ENCODE measurements at regions of chr10 and their contacts with region 1.

Region 1: DNA sequence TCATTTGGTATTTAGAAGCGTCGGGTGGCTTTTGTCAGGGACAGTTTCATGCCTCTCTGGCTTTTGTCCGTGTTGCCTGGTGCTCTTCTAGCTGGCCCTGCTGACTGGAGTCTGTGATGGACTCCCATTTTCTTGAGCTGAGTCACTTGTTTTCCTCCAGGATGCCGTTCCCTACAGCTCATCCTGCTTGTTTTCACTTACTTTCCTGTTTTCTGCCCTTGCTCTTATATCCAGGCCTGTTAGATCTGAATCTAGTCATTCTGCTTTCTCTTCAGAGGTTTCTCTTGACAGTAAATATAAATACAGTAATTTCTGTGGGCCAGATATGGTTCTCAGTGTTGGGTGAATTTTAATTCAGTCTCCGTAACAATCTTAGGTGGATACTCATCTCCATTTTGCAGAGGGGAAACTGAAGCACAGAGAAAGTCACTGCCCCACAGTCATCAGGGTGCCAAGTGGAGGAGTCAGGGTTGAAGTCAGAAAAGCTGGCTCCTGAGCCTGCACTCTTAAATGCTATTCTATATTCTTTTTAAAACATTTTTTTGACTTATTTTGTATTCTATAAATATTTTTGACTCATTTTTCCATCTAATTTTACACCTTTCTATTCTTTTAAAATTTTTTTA is 85.4 kb downstream of the CCNY start:
- DNase-seq: peak; percentile 82
- H3K4me3 ChIP-seq: peak overlapping the region in 1 of 3 experiments; percentile 1
- H3K27ac ChIP-seq: peak overlapping the region; percentile 47
- H3K4me1 ChIP-seq: peaks cover 53% of the 10 kb centered on the region
- H3K27me3 ChIP-seq: no peaks in the 10 kb centered on the region
- CTCF ChIP-seq: no peak

Region 2: DNA sequence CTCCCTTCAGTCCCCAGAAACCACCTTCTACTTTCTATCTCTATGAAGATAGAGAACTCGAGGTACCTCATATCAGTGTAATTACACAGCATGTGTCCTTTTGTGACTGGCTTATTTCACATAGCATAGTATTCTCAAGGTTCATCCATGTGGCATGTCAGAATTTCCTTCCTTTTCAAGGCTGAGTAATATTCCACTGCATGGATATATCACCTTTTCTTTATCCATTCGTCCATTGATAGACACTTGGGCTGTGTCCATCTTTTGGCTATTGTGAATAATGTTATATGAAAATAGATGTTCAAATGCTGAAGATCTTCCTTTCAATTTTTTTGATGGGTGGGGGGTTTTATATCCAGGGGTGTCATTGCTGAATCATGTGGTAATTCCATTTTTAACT is 177.1 kb before region 1 on chr10:
- CTCF ChIA-PET with region 1: no interaction called
- dilution Hi-C with region 1: no loop called
- in situ Hi-C with region 1: no loop called
- intact Hi-C with region 1: loop called (anchors 5 kb)
- DNase-seq: no peak
- H3K4me3 ChIP-seq: no peak overlapping the region
- H3K27ac ChIP-seq: no peak overlapping the region
- H3K4me1 ChIP-seq: no peaks in the 10 kb centered on the region
- H3K27me3 ChIP-seq: no peaks in the 10 kb centered on the region
- CTCF ChIP-seq: no peak

Region 3: DNA sequence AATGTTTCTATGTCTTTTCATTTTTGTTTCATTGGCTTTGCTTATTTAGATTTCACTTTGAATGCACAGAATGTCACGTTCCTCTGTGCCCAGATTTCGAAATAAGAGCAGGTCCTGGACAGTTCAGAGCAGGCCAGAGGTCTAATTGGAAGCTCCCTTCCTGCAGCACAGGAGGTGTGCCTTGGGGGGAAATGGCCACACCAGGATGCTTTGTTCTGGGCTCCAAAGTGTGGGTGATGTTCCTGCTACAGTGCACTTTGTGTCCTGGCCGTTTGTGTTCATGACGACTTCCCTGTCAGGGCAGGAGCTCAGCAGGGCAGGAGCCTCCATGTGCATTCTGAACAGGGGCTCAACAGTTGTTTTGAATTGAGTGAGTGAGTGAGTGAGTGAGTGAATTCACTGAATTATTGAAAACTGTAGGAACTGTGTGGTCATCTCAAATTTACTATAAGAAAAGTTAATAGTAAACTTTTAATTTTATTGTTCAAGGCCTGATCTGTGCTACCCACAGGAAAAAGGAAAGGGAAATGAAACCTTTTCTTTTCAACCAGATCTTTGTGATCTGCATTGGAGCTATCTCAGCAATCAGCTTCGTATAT is 74.0 kb after region 1 on chr10:
- CTCF ChIA-PET with region 1: no interaction called
- dilution Hi-C with region 1: no loop called
- in situ Hi-C with region 1: no loop called
- intact Hi-C with region 1: loop called (anchors 5 kb)
- DNase-seq: peak; percentile 4
- H3K4me3 ChIP-seq: no peak overlapping the region
- H3K27ac ChIP-seq: no peak overlapping the region
- H3K4me1 ChIP-seq: peaks cover 10% of the 10 kb centered on the region
- H3K27me3 ChIP-seq: no peaks in the 10 kb centered on the region
- CTCF ChIP-seq: no peak

Region 4: DNA sequence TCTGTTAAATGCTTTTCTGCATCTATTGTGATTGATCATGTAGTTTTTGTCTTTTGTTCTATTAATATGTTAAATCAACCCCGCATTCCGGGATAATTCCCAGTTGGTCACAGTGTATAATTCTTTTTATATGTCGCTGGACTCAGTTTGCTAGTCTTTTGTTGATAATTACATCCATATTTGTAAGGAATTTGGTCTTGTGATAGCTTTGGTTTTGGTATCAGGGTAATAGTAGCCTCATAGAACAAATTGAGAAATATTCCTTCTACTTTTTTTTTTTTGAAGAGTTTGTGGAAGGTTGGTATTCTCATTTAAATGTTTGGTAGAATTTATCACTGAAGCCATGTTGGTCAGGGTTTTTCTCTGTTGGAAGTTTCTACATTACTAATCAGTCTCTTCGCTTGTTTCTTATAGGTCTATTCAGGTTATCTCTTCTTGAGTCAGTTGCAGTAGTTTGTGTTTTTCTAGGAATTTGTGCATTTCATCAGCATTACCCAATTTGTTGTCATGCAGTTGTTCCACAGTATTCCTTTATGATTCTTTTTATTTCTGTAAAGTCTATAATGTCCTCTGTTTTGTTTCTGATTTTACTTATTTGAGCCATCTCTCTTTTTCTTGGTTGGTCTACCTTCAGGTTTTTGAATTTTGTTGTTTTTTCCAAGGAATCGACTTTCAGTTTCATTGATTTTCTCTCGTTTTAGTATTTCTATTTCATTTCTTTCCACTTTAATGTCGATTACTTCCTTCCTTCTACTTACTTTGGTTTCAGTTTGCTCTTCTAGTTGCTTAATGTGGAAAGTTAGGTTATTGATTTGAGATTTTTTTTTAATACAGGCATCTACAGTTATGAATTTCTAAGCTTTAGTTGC is 118.9 kb after region 1 on chr10:
- CTCF ChIA-PET with region 1: no interaction called
- dilution Hi-C with region 1: no loop called
- in situ Hi-C with region 1: no loop called
- intact Hi-C with region 1: loop called (anchors 2 kb)
- DNase-seq: no peak
- H3K4me3 ChIP-seq: no peak overlapping the region
- H3K27ac ChIP-seq: no peak overlapping the region
- H3K4me1 ChIP-seq: peaks cover 3% of the 10 kb centered on the region
- H3K27me3 ChIP-seq: no peaks in the 10 kb centered on the region
- CTCF ChIP-seq: no peak

Region 5: GRCh38 chr10:35781643-35782035 is 360.0 kb after region 1 on chr10:
- CTCF ChIA-PET with region 1: no interaction called
- dilution Hi-C with region 1: no loop called
- in situ Hi-C with region 1: no loop called
- intact Hi-C with region 1: no loop called
- DNase-seq: no peak
- H3K4me3 ChIP-seq: no peak overlapping the region
- H3K27ac ChIP-seq: no peak overlapping the region
- H3K4me1 ChIP-seq: peaks cover 27% of the 10 kb centered on the region
- H3K27me3 ChIP-seq: no peaks in the 10 kb centered on the region
- CTCF ChIP-seq: peak in 1 of 2 donors; percentile 1

Measured in mammary epithelial cell (primary cell).